ENCODE measurements at regions of chr11 and their contacts with region 1.

Region 1: DNA sequence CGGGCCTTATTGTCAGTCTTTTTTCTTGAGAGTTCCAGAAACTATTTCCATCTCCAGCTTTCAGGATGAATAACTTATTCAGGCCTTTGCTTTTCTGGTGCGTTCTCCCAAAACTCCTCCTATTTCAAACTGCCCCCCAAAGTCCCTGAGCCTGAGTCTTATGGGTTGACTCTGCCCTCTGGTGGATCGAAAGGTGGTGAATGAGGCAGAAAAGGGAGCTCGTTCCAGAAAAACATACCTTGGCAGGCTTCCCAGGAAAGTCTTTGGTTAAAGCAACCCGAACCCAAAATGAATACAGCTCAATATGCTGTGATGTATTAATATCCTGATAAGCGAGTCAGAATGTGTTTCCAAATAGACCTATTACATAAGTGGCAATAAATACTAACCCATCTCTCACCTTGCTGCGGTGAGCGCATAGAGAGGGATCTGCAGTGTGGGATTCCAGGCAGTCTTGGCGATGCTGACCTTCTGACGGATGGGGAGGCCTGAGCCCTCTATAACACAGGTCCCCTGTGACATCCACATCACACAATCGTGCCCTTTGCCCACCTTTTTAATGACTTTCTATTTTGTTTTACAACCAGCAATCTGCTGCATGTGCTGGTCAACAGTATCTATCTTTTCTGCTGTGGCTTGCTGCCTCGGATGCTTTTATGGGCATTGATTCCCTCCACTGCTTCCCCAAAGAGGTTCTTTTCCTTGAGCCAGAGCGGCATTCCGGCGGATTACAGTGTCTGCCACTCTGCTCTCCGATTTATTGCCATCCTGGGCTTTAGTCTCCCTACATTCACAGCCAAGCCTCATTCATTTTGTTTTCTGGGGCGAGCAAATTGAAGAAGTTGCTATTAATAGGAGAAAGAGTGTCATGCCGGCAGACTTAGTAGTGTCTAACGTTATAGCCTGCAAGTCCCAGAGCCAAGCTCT is 756.8 kb downstream of the NTM start:
- DNase-seq: peak; percentile 46
- ATAC-seq: peak; percentile 46
- H3K4me3 Mint-ChIP-seq: no peak overlapping the region
- H3K27ac Mint-ChIP-seq: no peak overlapping the region
- H3K4me1 Mint-ChIP-seq: peaks cover 23% of the 10 kb centered on the region
- H3K27me3 Mint-ChIP-seq: no peaks in the 10 kb centered on the region
- CTCF ChIP-seq: peak; percentile 47

Region 2: DNA sequence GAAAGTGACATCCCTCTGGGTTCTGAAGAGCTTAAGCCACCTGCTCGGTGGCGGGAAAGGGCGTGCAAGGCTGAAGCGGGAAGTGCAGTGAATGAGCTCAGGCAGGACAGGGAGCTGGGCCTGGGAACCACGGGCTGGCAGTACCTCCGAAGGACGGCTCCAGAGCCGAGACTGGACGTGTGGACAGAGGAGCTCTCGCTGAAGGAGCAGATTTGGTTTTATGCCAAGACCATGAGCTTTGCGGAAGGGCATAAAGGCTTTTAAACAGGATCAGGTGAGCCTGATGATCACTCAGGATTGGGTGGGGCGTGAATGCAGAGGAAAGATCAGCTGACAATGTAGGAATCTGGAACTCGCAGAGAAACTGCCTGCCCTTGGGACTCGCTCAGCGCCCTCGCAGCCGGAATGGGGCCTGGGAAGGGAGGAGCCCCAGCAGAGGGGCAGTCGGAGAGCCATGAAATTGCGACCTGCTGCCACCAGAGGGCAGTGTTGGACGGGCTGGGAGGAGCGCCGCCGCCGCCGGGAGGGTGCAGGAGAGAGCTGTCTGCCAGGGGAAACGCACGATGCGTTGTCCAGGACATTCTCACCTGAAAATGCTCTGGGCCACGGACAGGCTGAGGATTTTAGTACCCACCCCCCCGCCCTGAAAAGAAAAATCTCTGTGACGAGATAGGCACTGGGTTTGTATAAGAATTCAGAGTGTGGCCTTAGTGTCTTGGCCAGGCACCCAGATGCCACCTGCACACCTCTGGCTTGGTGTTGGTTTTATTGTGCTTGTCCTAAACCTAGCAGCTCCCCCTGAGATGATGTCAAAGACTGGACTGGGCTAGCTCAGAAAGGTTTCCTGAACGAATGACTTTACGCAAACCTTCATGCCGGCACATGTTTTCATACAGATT is 432.5 kb before region 1 on chr11:
- CTCF ChIA-PET with region 1: interaction called, 58 read pairs
- POLR2A ChIA-PET with region 1: interaction called, 4 read pairs
- DNase-seq: peak; percentile 92
- ATAC-seq: peak; percentile 85
- H3K4me3 Mint-ChIP-seq: peak overlapping the region; percentile 38
- H3K27ac Mint-ChIP-seq: no peak overlapping the region
- H3K4me1 Mint-ChIP-seq: peaks cover 9% of the 10 kb centered on the region
- H3K27me3 Mint-ChIP-seq: peaks cover 45% of the 10 kb centered on the region
- CTCF ChIP-seq: peak; percentile 96

Region 3: DNA sequence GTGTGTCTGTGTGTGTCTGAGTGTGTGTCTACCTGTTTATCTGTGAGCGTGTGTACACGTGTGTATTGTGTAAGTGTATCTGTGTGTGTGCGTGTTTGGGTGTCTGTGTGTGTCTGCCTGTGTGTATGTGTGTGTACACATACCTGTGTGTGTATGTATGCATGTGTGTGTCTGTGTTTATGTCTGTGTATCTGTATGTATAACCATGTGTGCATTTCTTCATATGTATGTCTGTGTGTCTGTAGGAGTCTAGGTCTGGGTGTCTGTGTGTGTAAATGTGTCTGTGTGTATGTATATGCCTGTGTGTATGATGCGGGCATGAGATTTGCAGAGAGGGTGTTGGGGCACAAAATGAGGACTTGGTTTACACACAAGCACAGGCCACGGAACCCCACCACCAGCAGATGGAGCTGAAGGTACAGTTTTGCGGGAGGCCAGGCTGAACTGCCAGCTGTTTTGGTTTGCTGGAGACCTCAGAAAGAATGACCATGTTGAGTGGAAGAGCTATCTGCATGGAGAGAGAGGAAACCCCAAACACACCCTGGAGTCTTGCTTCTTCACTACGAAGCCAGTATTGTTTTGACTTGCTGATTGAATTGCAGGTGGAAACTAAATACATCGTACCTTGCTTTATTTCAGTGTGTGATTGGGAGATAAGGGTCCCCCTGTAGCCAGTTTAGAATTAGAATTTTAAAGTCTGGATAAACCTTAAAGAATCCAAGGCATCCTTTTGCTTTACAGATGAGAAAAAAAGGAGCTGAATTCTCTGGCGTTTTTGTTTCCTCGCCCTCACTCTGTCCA is 259.6 kb before region 1 on chr11:
- CTCF ChIA-PET with region 1: interaction called, 88 read pairs
- POLR2A ChIA-PET with region 1: no interaction called
- DNase-seq: peak; percentile 79
- ATAC-seq: peak; percentile 69
- H3K4me3 Mint-ChIP-seq: no peak overlapping the region
- H3K27ac Mint-ChIP-seq: peak overlapping the region; percentile 69
- H3K4me1 Mint-ChIP-seq: peaks cover 63% of the 10 kb centered on the region
- H3K27me3 Mint-ChIP-seq: no peaks in the 10 kb centered on the region
- CTCF ChIP-seq: peak; percentile 41

Region 4: DNA sequence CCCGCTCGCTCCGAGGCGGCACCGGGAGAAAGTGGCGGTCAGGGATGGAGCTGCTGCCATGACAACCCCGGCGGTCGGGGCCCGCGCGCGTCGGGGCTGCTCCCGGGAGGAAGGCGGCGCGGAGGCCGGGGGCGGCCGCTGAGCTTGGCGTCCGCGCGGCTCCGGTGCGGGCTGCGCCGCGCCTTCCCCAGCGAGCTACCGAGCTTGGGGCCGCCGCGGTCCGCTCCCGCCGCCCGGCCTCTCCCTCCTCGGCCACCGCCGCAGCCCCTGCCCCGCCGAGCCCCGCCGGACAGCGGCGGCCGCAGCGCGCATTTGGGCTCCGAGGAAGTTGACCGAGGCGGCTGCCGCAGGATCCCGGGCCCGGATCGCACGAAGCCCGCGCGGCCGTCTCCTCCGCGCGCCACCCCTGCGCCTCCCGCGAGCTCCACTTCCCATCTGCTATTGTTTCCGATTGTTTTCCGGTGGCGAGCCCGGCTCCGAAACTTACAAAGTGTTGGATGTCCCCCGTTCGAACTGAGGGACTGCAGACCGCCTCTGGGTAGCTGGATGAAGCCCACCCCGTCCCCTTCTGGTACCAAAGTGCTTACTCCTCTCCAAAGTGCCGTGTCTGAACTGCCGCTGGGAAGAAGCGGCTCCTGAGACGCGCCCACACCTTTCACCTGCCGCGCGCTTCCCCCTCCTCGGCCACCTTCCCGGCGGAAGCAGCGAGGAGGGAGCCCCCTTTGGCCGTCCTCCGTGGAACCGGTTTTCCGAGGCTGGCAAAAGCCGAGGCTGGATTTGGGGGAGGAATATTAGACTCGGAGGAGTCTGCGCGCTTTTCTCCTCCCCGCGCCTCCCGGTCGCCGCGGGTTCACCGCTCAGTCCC is 216.5 kb before region 1 on chr11:
- CTCF ChIA-PET with region 1: interaction called, 25 read pairs
- POLR2A ChIA-PET with region 1: no interaction called
- DNase-seq: peak; percentile 50
- ATAC-seq: peak; percentile 32
- H3K4me3 Mint-ChIP-seq: peak overlapping the region; percentile 88
- H3K27ac Mint-ChIP-seq: no peak overlapping the region
- H3K4me1 Mint-ChIP-seq: peaks cover 52% of the 10 kb centered on the region
- H3K27me3 Mint-ChIP-seq: peaks cover 8% of the 10 kb centered on the region; the same call in 1 of the 2 replicates
- CTCF ChIP-seq: no peak

Region 5: DNA sequence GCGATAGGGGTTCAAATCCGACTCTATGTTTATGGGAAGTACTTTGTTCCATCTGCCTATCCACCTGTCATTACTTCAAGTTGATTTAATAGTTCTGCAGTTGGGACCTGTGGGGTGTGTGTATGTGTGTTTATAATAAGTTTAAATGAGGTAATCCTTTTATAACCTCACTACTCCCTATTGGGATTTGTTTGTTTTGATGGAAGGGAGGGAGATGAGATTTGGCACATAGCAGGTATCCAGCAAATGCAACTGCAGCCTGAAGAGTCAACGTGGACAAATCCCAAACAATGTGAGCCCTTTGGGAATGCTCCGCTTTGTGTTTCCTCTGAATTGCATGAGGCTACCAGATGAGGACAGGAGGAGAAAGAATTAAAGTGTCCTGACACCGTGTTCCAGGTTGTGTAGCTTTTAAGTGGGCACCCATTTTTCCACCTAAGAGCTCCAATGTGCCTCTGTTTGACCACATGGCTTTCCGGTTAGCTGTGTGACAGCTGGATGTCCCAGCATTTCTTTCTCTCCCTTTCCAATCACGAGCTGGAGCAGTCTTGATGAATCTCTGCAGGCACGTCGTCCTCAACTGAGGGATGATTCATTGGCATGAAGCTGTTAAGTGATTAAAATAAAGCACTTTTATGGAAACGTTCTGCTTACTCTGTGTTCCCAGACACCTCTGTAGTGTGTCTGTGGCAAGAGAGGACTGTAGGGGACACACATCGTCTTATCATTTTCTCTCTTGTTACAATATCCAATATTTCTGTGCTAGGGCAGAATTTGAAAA is 146.2 kb before region 1 on chr11:
- CTCF ChIA-PET with region 1: interaction called, 15 read pairs
- POLR2A ChIA-PET with region 1: no interaction called
- DNase-seq: no peak
- ATAC-seq: no peak
- H3K4me3 Mint-ChIP-seq: no peak overlapping the region
- H3K27ac Mint-ChIP-seq: peak overlapping the region; percentile 96
- H3K4me1 Mint-ChIP-seq: peaks cover 92% of the 10 kb centered on the region
- H3K27me3 Mint-ChIP-seq: no peaks in the 10 kb centered on the region
- CTCF ChIP-seq: no peak

Region 6: GRCh38 chr11:132114185-132114584 is 13.1 kb before region 1 on chr11:
- CTCF ChIA-PET with region 1: interaction called, 76 read pairs
- POLR2A ChIA-PET with region 1: no interaction called
- DNase-seq: peak; percentile 72
- ATAC-seq: peak; percentile 83
- H3K4me3 Mint-ChIP-seq: no peak overlapping the region
- H3K27ac Mint-ChIP-seq: no peak overlapping the region
- H3K4me1 Mint-ChIP-seq: peaks cover 56% of the 10 kb centered on the region
- H3K27me3 Mint-ChIP-seq: no peaks in the 10 kb centered on the region
- CTCF ChIP-seq: no peak